ENCODE measurements at regions of chr6 and their contacts with region 1.

Region 1: DNA sequence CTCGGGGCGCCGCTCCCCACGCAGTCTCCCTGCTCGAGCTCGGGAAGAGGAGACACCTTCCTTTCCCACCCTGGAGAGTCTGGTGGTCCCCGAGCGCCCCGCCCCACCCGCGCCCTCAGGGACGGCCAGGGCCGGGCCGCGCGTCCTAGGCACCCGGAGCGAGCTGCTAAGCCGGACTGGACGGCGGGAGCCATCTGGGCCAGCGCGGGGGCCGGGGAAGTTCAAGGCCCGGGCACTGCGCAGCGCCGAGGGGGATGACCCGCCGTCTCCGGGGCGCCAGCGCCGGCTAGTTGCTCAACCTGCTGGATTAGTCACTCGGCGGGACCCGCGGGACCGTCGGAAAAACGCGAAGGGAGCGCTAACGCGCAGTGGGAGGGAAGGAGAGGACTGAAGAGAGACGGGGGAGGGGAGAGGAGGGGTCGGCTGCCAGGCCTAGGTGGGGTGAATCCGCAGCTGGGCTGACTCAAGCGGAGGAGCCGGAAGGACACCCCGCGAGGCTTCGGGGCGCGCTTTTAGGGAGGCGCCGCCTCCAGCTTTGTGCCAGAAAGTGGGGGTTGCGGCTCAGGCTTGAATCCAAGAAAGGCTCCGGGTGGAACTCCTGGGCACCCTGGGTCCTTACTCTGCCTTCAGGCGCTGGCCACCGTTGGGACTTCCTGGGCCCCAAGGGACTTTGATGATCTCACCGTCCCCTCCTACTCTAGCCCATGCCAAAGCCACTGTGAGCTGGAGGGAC is 75.7 kb upstream of the FOXP4 start:
- DNase-seq: peak in 1 of 2 donors; percentile 88
- H3K4me3 ChIP-seq: peak overlapping the region; percentile 4 to 30
- H3K27ac ChIP-seq: peak overlapping the region; percentile 33 to 36
- H3K4me1 ChIP-seq: peaks cover 0 to 9% of the 10 kb centered on the region in 2 donors
- H3K27me3 ChIP-seq: no peaks in the 10 kb centered on the region
- CTCF ChIP-seq: no peak

Region 2: GRCh38 chr6:41505122-41506049 is 34.9 kb after region 1 on chr6:
- intact Hi-C with region 1: loop called (anchors 1 kb)
- DNase-seq: peak in 1 of 2 donors; percentile 90
- H3K4me3 ChIP-seq: peak overlapping the region; percentile 53 to 63
- H3K27ac ChIP-seq: peak overlapping the region; percentile 85 to 90
- H3K4me1 ChIP-seq: peaks cover 4 to 12% of the 10 kb centered on the region in 2 donors
- H3K27me3 ChIP-seq: no peaks in the 10 kb centered on the region
- CTCF ChIP-seq: no peak

Region 3: DNA sequence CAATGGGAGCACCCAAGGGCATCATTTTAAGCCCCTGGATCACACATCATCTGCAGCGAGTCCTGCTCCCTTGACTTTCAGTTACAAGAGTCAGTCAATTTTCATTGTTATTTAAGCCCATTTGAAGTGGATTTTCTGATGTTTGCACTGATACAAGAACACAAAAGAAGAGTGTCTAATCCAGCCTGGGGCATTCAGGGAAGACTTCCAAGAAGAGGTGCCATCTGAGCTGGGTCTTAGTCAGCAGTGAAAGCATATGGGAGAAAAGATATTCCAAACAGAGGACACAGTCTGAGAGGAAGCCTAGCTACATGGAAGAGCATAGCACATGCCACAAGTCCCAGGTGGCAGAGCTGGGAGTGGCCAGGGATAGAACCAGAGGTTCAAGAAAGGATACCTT is 65.3 kb after region 1 on chr6:
- intact Hi-C with region 1: no loop called
- DNase-seq: no peak
- H3K4me3 ChIP-seq: no peak overlapping the region
- H3K27ac ChIP-seq: no peak overlapping the region
- H3K4me1 ChIP-seq: no peaks in the 10 kb centered on the region
- H3K27me3 ChIP-seq: peaks cover 4% of the 10 kb centered on the region
- CTCF ChIP-seq: no peak

Region 4: GRCh38 chr6:41545703-41546474 is 75.4 kb after region 1 on chr6 and contains the start of gene FOXP4:
- intact Hi-C with region 1: loop called (anchors 2 kb)
- DNase-seq: peak; percentile 49 to 93
- H3K4me3 ChIP-seq: peak within 1 kb of the TSS; percentile 75 to 95
- H3K27ac ChIP-seq: peak within 1 kb of the TSS; percentile 50 to 92
- H3K4me1 ChIP-seq: peaks cover 11 to 16% of the 10 kb centered on the region in 2 donors
- H3K27me3 ChIP-seq: no peaks in the 10 kb centered on the region
- CTCF ChIP-seq: no peak
- total RNA-seq, gene FOXP4: 19.5 TPM

Measured in ascending aorta (tissue), 2 donors.